Psoas muscle (tissue), 8 donors: ENCODE measurements at regions of chr2 and their contacts with region 1.

Region 1: GRCh38 chr2:60906395-60906794 is 25.0 kb downstream of the REL start:
- DNase-seq: no peak
- ATAC-seq: no peak
- H3K4me3 ChIP-seq: no peak overlapping the region
- H3K27ac ChIP-seq: no peak overlapping the region
- H3K4me1 ChIP-seq: no peaks in the 10 kb centered on the region
- H3K27me3 ChIP-seq: no peaks in the 10 kb centered on the region
- CTCF ChIP-seq: no peak

Region 2: DNA sequence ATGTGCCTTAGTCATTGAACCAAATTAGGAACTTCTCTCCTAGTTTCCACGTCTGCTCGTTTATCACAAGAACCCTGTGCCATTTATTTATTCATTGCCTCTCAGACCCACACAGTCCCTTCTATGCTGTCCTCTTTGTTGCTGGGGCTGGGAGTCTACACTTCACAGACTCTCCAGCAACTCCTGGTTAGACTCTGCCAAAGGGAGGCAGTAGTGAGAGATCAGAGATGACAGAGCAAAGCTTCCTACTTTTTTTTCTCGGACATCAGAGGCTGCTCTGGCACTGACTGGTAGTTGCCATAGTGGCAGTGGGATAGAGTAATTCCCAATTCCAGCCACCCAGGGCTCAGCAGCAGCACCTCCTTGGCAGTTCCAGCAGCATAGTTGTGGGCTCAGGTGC is 630.4 kb before region 1 on chr2:
- intact Hi-C with region 1: no loop called
- DNase-seq: no peak
- ATAC-seq: no peak
- H3K4me3 ChIP-seq: no peak overlapping the region
- H3K27ac ChIP-seq: no peak overlapping the region
- H3K4me1 ChIP-seq: no peaks in the 10 kb centered on the region
- H3K27me3 ChIP-seq: peaks cover 0 to 2% (median 0%) of the 10 kb centered on the region in 3 donors
- CTCF ChIP-seq: no peak

Region 3: GRCh38 chr2:60780721-60781120 is 125.7 kb before region 1 on chr2:
- intact Hi-C with region 1: loop called in 1 of 2 experiments (anchors 10 kb)
- DNase-seq: no peak
- ATAC-seq: no peak
- H3K4me3 ChIP-seq: no peak overlapping the region
- H3K27ac ChIP-seq: no peak overlapping the region
- H3K4me1 ChIP-seq: no peaks in the 10 kb centered on the region
- H3K27me3 ChIP-seq: no peaks in the 10 kb centered on the region
- CTCF ChIP-seq: no peak